Gastrocnemius medialis (tissue), 4 donors: ENCODE measurements at regions of chr2 and their contacts with region 1.

Region 1: GRCh38 chr2:178990533-178991241 is 59.2 kb downstream of the CCDC141 start:
- DNase-seq: no peak
- ATAC-seq: no peak
- H3K4me3 ChIP-seq: no peak overlapping the region
- H3K27ac ChIP-seq: no peak overlapping the region
- H3K4me1 ChIP-seq: no peaks in the 10 kb centered on the region
- H3K27me3 ChIP-seq: no peaks in the 10 kb centered on the region
- CTCF ChIP-seq: no peak
- POLR2A ChIP-seq: no peak

Region 2: DNA sequence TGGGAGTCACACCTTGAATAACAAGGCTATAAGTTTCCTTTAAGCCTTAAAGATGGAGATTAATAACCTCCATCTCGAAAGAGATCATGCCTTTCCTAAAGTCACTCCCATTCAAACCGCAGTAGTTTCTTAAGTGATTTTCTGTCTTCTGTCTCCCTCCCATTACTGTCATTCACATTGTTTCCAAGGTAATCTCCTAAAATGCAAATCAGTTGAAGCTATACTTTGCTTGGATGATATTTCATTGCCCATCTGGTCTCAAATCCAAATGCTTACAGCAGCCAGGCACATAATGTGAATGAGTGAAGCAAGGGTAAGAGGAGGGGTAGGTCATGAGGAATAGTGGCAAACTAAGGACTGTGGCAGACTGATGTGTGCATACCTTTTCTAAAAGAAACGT is 57.2 kb before region 1 on chr2:
- in situ Hi-C with region 1: no loop called
- intact Hi-C with region 1: loop called (anchors 2 kb)
- DNase-seq: no peak
- ATAC-seq: no peak
- H3K4me3 ChIP-seq: no peak overlapping the region
- H3K27ac ChIP-seq: no peak overlapping the region
- H3K4me1 ChIP-seq: no peaks in the 10 kb centered on the region
- H3K27me3 ChIP-seq: no peaks in the 10 kb centered on the region
- CTCF ChIP-seq: no peak
- POLR2A ChIP-seq: no peak